RWPE1 (cell line): ENCODE measurements at regions of chr15 and their contacts with region 1.

Region 1: DNA sequence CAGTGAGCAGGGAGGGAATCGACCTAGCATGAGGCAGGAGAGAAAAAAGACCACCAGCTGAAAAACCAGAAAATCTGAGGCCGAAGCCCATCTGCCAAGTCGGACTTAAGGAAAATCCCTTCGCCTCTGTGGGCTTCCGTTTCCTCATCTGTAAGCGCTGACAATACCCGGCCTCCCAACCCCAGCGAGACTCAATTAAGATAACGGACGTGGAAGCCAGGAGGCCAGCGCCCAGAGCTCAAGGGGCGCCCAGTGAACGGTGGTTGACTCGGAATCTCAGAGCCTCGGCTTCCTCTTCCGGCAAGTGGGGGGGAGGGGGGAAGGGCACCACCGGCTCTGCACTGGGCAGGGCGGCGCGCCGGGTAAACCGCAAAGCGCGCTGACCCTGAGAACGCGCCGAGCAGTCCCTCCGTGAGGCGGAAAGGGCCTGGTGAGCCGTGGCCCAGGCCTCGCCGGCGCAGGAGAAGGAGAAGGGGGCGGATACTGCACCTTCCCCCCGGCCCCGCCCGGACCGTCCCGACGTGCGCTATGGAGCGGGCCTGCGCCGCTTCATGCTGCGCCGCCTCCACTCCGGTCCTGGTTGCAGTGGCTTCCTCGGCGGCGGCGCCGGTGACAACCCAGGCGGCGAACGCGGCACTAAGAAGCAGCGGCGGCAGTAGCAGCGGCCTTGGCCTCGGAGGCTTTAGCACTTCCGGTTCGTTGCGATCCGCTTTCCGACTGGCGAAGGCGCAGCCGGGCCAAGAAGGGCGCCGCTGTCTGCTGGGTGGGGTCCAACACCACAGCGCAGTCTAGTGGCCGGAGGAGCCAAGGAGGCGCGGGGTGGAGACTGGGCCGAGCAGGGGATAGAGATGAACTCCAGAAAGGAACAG is at the start of gene DPP8:
- DNase-seq: peak; percentile 92
- H3K27ac ChIP-seq: peak within 1 kb of the TSS; percentile 91
- CTCF ChIP-seq: peak; percentile 99

Region 2: DNA sequence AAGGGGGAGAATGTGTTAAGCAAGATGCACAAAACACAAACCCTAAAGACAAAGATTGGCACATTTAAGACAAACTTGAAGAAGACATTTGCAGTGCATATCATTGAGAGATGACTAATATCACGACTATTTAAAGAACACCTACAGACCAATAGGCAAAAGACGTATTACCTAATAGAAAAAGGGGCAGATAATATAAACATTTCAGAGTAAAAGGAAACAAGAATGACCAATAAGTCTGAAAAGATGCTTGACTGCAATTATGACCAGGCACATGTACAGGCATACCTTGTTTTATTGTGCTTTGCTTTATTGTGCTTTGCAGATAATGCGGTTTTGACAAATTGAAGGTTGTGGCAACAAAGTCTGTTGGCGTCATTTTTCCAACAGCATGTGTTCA is 18.0 kb after region 1 on chr15:
- CTCF ChIA-PET with region 1: interaction called, 6 read pairs
- POLR2A ChIA-PET with region 1: interaction called, 13 read pairs
- DNase-seq: peak; percentile 52
- H3K27ac ChIP-seq: no peak overlapping the region
- CTCF ChIP-seq: no peak